HCT116 (cell line): ENCODE measurements at regions of chr11 and their contacts with region 1.

Region 1: DNA sequence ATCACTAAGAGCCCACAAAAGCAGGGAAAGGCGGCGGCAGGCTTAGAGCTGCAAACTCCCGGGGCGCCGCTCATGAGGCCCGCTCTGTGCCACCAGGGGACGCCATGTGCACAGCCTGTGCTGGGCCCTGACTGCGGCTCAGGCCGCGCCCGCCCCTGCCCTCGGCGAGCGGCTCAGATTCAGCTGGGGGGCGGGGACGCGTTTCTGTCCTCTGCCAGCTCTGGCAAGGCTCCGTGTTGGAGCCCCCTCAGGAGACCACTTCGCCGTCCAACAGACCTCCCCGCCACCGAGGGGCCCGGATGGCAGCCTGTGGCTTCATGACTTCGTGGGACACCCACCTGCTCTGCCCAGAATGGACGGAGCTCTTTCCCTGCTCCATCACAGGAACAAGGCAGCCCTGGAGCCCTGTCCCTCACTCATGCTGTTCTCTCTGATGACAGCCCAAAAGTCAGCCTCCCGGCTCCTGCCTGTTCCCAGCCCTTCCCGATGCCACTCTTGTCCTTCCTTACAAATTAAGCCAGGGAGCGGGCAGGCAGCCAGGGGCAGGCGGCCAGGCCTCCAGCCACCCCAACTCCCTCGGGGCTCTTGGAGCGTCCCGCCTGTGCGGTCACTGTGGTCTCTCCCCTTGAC is 69.1 kb downstream of the NAT10 start:
- DNase-seq: peak; percentile 45
- ATAC-seq: peak; percentile 100
- H3K4me3 ChIP-seq: no peak overlapping the region; a peak in 1 of 4 replicates
- H3K27ac ChIP-seq: no peak overlapping the region
- H3K4me1 ChIP-seq: peaks cover 2 to 12% of the 10 kb centered on the region in 2 experiments; a peak in 2 of 4 replicates
- H3K27me3 ChIP-seq: no peaks in the 10 kb centered on the region
- CTCF ChIP-seq: peak; percentile 86 to 97 (median 97)
- POLR2A ChIP-seq: no peak
- RAD21 ChIP-seq: peak; percentile 100

Region 2: DNA sequence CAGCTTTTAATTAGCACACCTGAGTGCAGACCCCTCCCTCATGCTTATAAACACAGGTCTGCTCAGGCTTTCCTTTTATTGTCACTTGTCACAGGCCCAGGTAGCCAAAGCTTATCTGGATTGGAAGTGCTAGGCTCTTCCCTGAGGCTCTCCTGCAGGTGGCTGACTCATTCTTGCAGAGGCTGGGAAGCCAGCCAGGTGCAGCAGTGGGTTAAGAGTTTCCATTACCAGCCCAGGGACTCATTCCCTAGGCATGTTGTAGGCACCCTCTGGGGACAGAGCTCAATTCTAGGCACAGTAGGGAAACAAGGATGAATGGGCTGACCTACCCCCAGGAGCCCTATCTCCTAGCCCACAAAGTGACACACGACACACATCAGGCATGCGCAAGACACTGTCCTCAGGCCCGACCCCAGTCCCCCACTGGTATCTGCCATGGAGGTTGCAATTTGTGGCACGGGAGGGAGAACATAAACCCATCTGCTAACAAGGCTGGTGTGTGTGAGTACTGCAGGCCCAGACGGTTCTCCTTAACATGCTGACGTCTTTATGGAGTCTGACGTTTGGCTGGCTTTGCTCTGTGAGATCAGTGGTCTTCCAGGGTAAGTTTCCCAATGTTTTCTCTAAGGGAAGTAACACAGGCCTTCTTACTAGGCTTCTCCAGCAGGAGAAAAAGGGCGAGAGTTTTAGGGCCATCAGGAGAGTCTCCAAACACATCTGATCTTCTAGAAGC is 89.1 kb after region 1 on chr11:
- CTCF ChIA-PET with region 1: interaction called, 12 read pairs
- POLR2A ChIA-PET with region 1: interaction called, 5 read pairs
- RAD21 ChIA-PET with region 1: interaction called, 4 read pairs
- intact Hi-C with region 1: no loop called
- DNase-seq: peak; percentile 99
- ATAC-seq: peak; percentile 96
- H3K4me3 ChIP-seq: peak overlapping the region in 1 of 2 experiments; percentile 41; a peak in 3 of 4 replicates
- H3K27ac ChIP-seq: peak overlapping the region; percentile 90
- H3K4me1 ChIP-seq: peaks cover 37 to 44% of the 10 kb centered on the region in 2 experiments
- H3K27me3 ChIP-seq: no peaks in the 10 kb centered on the region
- CTCF ChIP-seq: no peak
- POLR2A ChIP-seq: no peak
- RAD21 ChIP-seq: peak; percentile 63

Region 3: GRCh38 chr11:34366522-34366921 is 192.0 kb after region 1 on chr11:
- CTCF ChIA-PET with region 1: interaction called, 14 read pairs
- POLR2A ChIA-PET with region 1: no interaction called
- RAD21 ChIA-PET with region 1: interaction called in 1 of 2 experiments, 4 read pairs
- intact Hi-C with region 1: no loop called
- DNase-seq: peak; percentile 73
- ATAC-seq: peak; percentile 66
- H3K4me3 ChIP-seq: no peak overlapping the region
- H3K27ac ChIP-seq: no peak overlapping the region
- H3K4me1 ChIP-seq: peaks cover 5 to 7% of the 10 kb centered on the region in 2 experiments; a peak in 3 of 4 replicates
- H3K27me3 ChIP-seq: no peaks in the 10 kb centered on the region
- CTCF ChIP-seq: peak; percentile 70 to 89 (median 80)
- POLR2A ChIP-seq: no peak
- RAD21 ChIP-seq: peak; percentile 82

Region 4: DNA sequence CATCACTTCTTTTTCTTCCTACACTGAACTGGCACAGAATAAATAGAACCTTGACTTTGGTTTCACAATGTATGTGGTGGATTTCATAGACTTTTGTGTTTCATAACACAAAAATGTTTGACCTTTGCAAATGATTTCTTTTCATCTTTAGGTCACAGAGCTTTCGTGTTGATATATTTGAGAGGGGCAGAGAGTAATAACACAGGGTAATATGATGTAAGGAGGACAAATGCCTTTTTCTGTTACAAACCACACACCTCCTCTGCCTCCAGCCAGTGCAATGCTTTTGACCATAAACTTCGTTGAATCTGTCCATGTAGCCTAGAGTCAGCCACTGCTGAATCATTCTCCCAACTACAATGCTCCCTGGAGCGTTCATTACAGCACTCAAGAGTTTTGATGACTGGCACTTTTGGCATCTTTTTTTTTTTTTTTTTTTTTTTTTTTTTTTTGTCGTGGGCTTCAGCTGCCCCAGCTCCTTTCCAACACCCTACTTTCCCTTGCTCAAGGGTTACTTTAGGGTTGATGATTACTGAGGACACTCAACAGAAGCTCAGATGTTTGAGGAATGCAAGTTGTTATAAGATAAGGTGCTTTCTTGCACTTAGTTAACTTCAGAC is 252.8 kb after region 1 on chr11:
- CTCF ChIA-PET with region 1: no interaction called
- POLR2A ChIA-PET with region 1: no interaction called
- RAD21 ChIA-PET with region 1: no interaction called
- intact Hi-C with region 1: no loop called
- DNase-seq: no peak
- ATAC-seq: no peak
- H3K4me3 ChIP-seq: no peak overlapping the region
- H3K27ac ChIP-seq: no peak overlapping the region
- H3K4me1 ChIP-seq: peaks cover 0 to 4% of the 10 kb centered on the region in 2 experiments; a peak in 1 of 4 replicates
- H3K27me3 ChIP-seq: no peaks in the 10 kb centered on the region
- CTCF ChIP-seq: no peak
- POLR2A ChIP-seq: no peak
- RAD21 ChIP-seq: no peak

Region 5: DNA sequence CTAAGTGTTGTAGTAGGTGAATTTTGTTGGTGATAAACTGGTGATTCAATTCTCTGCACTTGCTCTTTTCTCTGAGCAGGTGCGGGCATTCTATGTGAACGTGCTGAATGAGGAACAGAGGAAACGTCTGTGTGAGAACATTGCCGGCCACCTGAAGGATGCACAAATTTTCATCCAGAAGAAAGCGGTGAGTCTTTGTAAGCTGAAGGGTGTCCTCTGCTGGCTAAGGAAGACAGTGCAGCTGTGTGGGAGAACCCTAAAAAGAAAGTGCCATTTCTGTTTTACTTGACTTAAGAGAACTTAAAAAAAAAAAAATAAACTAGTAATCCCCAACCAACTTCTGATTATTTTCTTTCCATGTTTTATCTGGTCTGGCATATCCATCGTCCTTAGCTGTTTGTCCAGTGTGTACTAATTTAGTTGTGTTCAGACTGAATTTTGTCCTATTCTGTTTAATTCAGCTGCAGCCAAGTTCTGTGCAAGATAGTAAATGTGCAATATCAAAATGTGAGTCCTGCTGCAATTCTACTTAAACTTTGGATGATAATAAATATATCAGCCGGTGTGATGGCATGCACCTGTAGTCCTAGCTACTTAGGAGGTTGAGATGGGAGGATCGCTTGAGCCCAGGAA is 293.8 kb after region 1 on chr11:
- CTCF ChIA-PET with region 1: interaction called, 14 read pairs
- POLR2A ChIA-PET with region 1: no interaction called
- RAD21 ChIA-PET with region 1: interaction called, 3 to 4 read pairs
- intact Hi-C with region 1: loop called (anchors 2 kb)
- DNase-seq: peak; percentile 28
- ATAC-seq: peak; percentile 81
- H3K4me3 ChIP-seq: no peak overlapping the region
- H3K27ac ChIP-seq: no peak overlapping the region
- H3K4me1 ChIP-seq: no peaks in the 10 kb centered on the region
- H3K27me3 ChIP-seq: no peaks in the 10 kb centered on the region
- CTCF ChIP-seq: peak; percentile 78 to 87 (median 82)
- POLR2A ChIP-seq: no peak
- RAD21 ChIP-seq: peak; percentile 79